ENCODE measurements at regions of chr3 and their contacts with region 1.

Region 1: GRCh38 chr3:136861890-136862616 is at the start of gene NCK1:
- DNase-seq: peak; percentile 98
- H3K4me3 ChIP-seq: peak within 1 kb of the TSS; percentile 84
- H3K27ac ChIP-seq: peak within 1 kb of the TSS; percentile 91
- H3K4me1 ChIP-seq: peaks cover 43% of the 10 kb centered on the region
- CTCF ChIP-seq: peak; percentile 63
- total RNA-seq, gene NCK1: 24.9 and 35.2 TPM in 2 replicates

Region 2: DNA sequence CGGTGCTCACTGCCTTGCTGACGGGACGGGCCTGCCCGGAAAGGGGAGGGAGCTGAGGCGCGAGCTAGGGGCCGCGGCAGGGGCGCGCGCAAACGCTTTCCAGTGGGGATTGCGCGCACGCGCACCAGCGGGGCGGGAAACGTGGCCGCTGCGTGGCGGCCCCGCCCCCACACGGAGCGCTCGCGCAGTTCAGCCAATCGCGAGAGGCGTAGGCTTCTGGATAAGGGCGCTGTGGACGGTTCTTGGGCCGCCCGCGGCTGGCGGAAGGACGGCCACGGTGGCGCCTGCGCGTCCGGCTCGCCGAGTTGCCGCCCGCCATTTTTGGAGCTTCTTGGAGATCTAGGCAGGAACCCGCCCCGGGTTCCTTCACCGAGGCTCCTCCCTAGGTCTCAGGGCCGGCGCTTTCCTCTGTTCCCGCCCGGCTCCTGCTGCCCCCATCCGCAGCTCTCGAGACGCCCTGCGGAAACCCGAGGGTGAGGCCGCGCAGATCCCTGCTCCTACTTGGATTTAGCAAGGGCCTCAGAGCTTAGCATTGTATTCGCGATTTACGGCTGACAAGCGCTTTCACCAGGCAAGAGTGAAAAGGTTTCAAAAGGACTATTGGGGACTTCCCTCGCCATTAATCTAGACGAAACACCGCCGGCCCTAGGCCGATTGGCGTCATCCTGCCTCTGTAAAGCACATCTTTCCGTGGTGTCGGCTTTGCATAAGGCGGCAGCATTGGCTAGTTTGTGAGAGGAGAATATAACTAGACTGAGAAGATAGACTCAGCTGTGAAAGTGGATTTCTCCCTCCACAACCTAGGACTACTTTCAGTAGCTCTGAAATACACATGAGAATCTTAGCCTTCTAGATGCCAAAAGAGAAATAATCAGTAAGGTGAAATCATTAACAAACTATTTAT is 109.4 kb before region 1 on chr3:
- CTCF ChIA-PET with region 1: interaction called, 6 read pairs
- POLR2A ChIA-PET with region 1: interaction called, 15 read pairs
- intact Hi-C with region 1: loop called (anchors 1 kb)
- DNase-seq: peak; percentile 99
- H3K4me3 ChIP-seq: peak overlapping the region; percentile 90
- H3K27ac ChIP-seq: peak overlapping the region; percentile 94
- H3K4me1 ChIP-seq: peaks cover 33% of the 10 kb centered on the region
- CTCF ChIP-seq: no peak; the same call in 1 of the 2 replicates

Region 3: DNA sequence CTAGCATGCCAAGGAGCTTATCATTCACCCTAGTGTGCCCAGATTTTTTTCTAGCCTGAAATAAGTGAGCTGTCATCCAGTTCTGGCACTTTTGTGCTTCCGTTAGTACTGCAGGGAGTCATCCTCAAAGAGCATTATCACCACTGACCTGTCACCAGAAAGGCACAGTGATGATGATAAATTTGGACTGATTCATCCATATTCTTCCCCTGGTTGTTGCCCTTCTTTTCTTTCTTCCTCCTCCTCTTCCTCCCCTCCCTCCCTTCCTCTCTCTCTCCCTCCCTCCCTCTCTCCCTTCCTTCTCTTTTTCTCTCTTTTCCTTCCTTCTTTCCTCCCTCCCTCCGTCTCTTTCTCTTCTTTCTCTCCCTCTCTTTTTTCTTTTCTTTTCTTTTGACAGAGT is 21.8 kb before region 1 on chr3:
- CTCF ChIA-PET with region 1: no interaction called
- POLR2A ChIA-PET with region 1: interaction called, 11 read pairs
- intact Hi-C with region 1: no loop called
- DNase-seq: no peak
- H3K4me3 ChIP-seq: no peak overlapping the region
- H3K27ac ChIP-seq: no peak overlapping the region
- H3K4me1 ChIP-seq: no peaks in the 10 kb centered on the region
- CTCF ChIP-seq: no peak

Region 4: DNA sequence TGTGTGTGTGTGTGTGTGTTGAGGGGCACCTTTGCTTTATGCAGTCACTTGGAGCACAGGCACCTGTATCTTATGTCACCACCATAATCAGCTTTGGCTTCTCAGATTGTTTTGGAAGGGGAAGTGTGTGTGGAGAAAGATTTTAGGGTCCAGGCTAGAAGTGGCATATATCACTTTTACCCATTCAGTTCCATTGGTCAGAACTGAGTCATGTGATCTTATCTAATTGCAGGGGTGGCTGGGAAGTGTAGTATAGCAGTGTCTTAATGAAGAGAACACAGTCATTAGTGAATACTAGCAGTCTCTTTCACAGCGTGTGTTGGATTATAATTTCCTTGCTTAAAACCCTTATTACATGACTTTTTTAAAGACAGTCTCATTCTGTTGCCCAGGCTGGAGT is 20.5 kb after region 1 on chr3:
- CTCF ChIA-PET with region 1: interaction called, 7 read pairs
- POLR2A ChIA-PET with region 1: interaction called, 35 read pairs
- intact Hi-C with region 1: loop called (anchors 1 kb)
- DNase-seq: peak; percentile 67
- H3K4me3 ChIP-seq: peak overlapping the region; percentile 52
- H3K27ac ChIP-seq: peak overlapping the region; percentile 96
- H3K4me1 ChIP-seq: peaks cover 71% of the 10 kb centered on the region
- CTCF ChIP-seq: no peak

Region 5: DNA sequence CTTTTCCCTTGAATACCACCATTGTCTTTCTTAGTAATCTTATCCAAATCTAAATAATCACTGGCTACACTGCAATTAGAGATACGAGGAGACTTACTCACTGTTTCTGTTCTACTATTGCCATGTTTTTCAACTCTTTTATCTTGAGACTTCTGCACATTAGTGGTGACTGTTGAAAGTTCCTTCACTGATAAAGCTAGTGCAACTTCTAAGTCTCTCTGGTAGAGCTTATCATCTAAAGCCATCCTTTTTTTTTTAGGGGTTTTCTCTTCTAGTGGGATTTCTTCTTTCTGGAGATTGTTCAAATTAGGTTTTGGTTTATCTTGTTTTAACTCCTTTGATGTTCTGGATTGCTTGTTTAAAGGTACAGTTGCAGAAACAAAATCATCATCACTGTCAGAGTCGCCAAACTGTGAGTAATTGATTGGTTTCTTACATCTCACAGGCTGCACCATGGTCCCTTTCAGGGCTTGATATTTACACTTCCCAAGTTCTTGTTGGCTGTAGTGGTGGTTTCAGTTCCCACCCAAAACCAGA is 37.6 kb after region 1 on chr3:
- CTCF ChIA-PET with region 1: no interaction called
- POLR2A ChIA-PET with region 1: interaction called, 7 read pairs
- intact Hi-C with region 1: loop called (anchors 5 kb)
- DNase-seq: no peak
- H3K4me3 ChIP-seq: no peak overlapping the region
- H3K27ac ChIP-seq: peak overlapping the region; percentile 57
- H3K4me1 ChIP-seq: peaks cover 71% of the 10 kb centered on the region
- CTCF ChIP-seq: no peak

Region 6: GRCh38 chr3:136938334-136938733 is 76.3 kb after region 1 on chr3:
- CTCF ChIA-PET with region 1: no interaction called
- POLR2A ChIA-PET with region 1: interaction called, 3 read pairs
- intact Hi-C with region 1: loop called (anchors 5 kb)
- DNase-seq: no peak
- H3K4me3 ChIP-seq: no peak overlapping the region
- H3K27ac ChIP-seq: no peak overlapping the region
- H3K4me1 ChIP-seq: peaks cover 29% of the 10 kb centered on the region
- CTCF ChIP-seq: no peak

Region 7: GRCh38 chr3:137013955-137014688 is 152.1 kb after region 1 on chr3:
- CTCF ChIA-PET with region 1: no interaction called
- POLR2A ChIA-PET with region 1: no interaction called
- intact Hi-C with region 1: loop called (anchors 5 kb)
- DNase-seq: peak; percentile 84
- H3K4me3 ChIP-seq: no peak overlapping the region
- H3K27ac ChIP-seq: no peak overlapping the region
- H3K4me1 ChIP-seq: no peaks in the 10 kb centered on the region
- CTCF ChIP-seq: peak; percentile 95

Measured in OCI-LY7 (cell line).